HepG2 (cell line): ENCODE measurements at regions of chr7 and their contacts with region 1.

Region 1: DNA sequence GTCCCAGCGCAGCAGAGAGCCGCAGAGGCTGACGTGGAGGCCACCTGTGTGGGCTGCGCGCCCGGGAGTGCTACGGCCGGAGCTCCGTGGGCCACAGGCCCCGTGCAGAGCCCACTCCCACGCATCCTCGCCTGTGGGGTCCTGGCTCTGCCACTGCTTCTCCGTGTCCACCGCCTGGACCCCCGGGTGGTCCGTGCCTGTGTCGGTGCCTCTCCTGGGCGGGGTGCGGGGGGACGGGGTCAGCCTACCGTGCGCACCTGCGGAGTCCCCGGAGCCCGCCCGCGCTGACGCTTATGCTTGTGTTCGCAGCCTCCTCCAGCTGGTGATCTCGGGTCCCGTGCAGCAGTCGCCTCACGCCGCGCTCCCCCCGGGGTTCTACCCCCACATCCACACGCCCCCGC is 7.8 kb upstream of the ZNF853 start:
- DNase-seq: no peak
- ATAC-seq: no peak; the same call in 2 of the 3 replicates
- H3K4me3 ChIP-seq: no peak overlapping the region
- H3K27ac ChIP-seq: no peak overlapping the region
- H3K4me1 ChIP-seq: no peaks in the 10 kb centered on the region
- H3K27me3 ChIP-seq: no peaks in the 10 kb centered on the region
- CTCF ChIP-seq: no peak
- EP300 ChIP-seq: no peak
- POLR2A ChIP-seq: no peak
- RAD21 ChIP-seq: no peak

Region 2: GRCh38 chr7:6637544-6638229 is 30.0 kb after region 1 on chr7:
- CTCF ChIA-PET with region 1: no interaction called
- POLR2A ChIA-PET with region 1: no interaction called
- in situ Hi-C with region 1: no loop called
- intact Hi-C with region 1: loop called (anchors 1 kb)
- DNase-seq: peak; percentile 39
- ATAC-seq: peak; percentile 84
- H3K4me3 ChIP-seq: peak overlapping the region; percentile 65 to 86 (median 83)
- H3K27ac ChIP-seq: no peak overlapping the region
- H3K4me1 ChIP-seq: peaks cover 31% of the 10 kb centered on the region
- H3K27me3 ChIP-seq: no peaks in the 10 kb centered on the region
- CTCF ChIP-seq: peak; percentile 65
- EP300 ChIP-seq: no peak
- POLR2A ChIP-seq: no peak
- RAD21 ChIP-seq: peak; percentile 68